Naive thymus-derived CD4-positive, alpha-beta T cell (primary cell): ENCODE measurements at regions of chr9 and their contacts with region 1.

Region 1: DNA sequence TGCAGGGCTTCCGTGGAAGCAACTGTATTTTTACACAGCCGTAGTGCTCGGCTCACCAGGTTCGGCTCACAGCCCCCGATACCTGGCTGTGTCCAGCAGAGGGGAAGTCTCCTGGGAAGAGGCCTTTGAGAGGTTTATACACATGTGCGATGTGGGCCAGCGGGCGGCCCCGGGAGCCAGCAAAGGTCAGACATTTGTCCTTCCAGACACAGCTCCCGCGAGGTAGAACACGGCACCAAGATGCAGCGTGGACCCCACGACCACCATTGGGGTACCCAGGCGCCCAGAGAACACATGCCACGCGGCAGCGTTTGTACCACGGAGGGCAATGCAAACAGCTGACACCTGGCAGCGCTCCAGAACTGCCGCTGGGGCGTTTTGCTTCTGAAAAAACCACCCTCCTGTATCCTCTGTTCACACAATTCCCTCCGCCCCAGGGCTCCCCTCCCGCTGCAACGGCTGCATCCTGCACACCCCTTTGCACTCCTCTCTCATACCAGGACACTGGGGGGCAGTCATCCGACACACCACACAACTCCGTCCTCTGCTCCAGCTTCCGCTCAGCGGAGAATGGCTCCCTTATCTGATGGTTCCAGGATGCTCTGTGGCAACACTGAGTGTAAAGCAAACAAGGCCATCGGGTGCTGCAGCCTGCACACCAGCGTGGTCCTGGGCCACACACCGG is 235.3 kb downstream of the SYK start:
- DNase-seq: peak; percentile 31 to 69 (median 54)
- ATAC-seq: peak; percentile 88
- H3K4me3 ChIP-seq: no peak overlapping the region
- H3K4me3 Mint-ChIP-seq: peak overlapping the region in 9 of 10 donors; percentile 13 to 73 (median 37)
- H3K27ac ChIP-seq: no peak overlapping the region
- H3K27ac Mint-ChIP-seq: peak overlapping the region in 5 of 9 donors; percentile 13 to 38 (median 26)
- H3K4me1 ChIP-seq: peaks cover 8 to 11% of the 10 kb centered on the region in 2 donors
- H3K4me1 Mint-ChIP-seq: peaks cover 10 to 65% (median 11%) of the 10 kb centered on the region in 7 donors
- H3K27me3 ChIP-seq: no peaks in the 10 kb centered on the region
- H3K27me3 Mint-ChIP-seq: peaks cover 0 to 34% (median 14%) of the 10 kb centered on the region in 5 donors

Region 2: GRCh38 chr9:91253488-91253887 is 216.5 kb after region 1 on chr9:
- CTCF ChIA-PET with region 1: no interaction called
- POLR2A ChIA-PET with region 1: no interaction called
- intact Hi-C with region 1: loop called (anchors 1 kb)
- DNase-seq: peak in 6 of 9 donors; percentile 5 to 32 (median 12)
- ATAC-seq: peak; percentile 64
- H3K4me3 ChIP-seq: no peak overlapping the region
- H3K4me3 Mint-ChIP-seq: no peak overlapping the region
- H3K27ac ChIP-seq: no peak overlapping the region
- H3K27ac Mint-ChIP-seq: peak overlapping the region in 1 of 9 donors; percentile 23
- H3K4me1 ChIP-seq: peaks cover 0 to 8% of the 10 kb centered on the region in 2 donors
- H3K4me1 Mint-ChIP-seq: peaks cover 0 to 45% (median 6%) of the 10 kb centered on the region in 7 donors
- H3K27me3 ChIP-seq: no peaks in the 10 kb centered on the region
- H3K27me3 Mint-ChIP-seq: no peaks in the 10 kb centered on the region

Region 3: DNA sequence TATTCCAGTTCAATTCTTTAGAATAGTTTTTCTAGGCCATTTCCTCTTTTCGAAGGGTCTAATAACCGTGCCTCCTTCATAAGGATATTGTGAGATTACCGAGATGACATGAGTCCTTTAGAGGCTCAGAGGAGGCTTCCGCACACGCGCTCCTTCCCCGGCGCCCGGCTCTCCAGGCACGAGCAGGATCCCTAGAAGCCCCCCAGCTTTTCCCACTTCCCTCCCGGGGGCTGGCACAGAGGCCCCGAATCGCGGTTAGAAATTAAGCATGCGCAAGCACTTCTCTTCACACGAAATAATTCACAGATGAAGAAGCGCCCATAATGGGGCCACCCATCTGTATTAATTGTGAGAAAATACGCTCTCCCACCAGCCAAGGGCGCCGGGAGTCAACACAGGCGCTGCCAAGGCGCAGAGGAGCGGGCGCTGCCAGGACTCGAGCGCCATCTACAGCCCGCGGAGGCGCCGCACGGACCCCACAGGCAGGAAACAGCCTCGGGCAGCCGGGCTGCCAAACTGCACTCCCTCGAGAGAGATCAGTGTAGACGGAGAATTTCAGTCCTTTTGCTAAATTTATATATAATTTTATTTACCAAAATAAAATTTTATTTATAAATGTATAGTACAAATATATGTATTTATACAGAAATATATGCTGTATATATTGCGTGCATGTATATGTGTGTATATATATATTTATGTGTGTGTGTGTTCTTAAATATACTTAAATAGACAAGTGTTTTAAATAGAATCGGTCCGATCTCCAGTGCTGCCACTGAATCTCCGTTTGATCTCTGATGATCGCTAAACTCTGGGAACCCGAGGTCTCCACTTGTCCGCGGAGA is 644.7 kb after region 1 on chr9:
- CTCF ChIA-PET with region 1: no interaction called
- POLR2A ChIA-PET with region 1: no interaction called
- intact Hi-C with region 1: loop called in 1 of 2 experiments (anchors 10 kb)
- DNase-seq: peak in 7 of 9 donors; percentile 11 to 76 (median 37)
- ATAC-seq: peak; percentile 85
- H3K4me3 ChIP-seq: no peak overlapping the region
- H3K4me3 Mint-ChIP-seq: peak overlapping the region in 6 of 10 donors; percentile 7 to 46 (median 31)
- H3K27ac ChIP-seq: no peak overlapping the region
- H3K27ac Mint-ChIP-seq: no peak overlapping the region
- H3K4me1 ChIP-seq: no peaks in the 10 kb centered on the region
- H3K4me1 Mint-ChIP-seq: peaks cover 0 to 5% (median 0%) of the 10 kb centered on the region in 7 donors
- H3K27me3 ChIP-seq: no peaks in the 10 kb centered on the region
- H3K27me3 Mint-ChIP-seq: peaks cover 21 to 46% (median 35%) of the 10 kb centered on the region in 5 donors

Region 4: DNA sequence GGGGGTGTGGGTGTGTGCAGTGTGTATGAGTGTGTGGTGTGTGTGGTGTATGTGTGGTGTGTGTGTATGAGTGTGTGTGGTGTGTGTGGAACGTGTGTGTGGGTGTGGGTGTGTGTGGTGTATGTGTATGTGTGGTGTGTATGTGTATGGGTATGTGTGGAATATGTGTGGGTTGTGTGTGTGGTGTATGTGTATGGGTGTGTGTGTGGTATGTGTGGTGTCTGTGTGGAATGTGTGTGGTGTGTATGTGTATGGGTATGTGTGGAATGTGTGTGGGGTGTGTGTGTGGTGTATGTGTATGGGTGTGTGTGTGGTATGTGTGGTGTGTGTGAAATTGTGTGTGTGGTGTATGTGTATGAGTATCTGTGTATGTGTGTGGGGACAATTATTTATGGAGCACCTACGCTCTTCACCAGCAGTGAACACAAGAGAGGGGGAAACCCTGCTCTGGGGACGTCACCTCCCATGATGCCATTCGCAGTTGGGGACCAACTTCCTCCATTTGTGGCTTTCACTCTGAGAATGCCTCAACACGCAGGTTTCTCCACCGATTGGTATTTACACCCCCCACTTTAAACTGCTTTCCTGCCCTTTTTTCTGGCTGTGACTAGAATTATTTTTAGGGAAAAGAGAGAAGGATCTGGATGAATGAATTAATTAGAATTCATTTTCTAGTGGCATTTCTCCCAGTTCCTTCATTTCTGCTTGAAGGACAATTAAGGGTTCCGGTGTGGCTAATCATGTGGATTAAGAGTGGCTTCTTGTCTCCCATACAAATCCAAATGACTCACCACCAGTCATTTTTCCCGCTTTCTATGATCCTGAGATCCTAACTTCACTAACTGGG is 675.0 kb after region 1 on chr9:
- CTCF ChIA-PET with region 1: no interaction called
- POLR2A ChIA-PET with region 1: no interaction called
- intact Hi-C with region 1: loop called in 1 of 2 experiments (anchors 10 kb)
- DNase-seq: peak in 7 of 9 donors; percentile 6 to 64 (median 34)
- ATAC-seq: peak; percentile 90
- H3K4me3 ChIP-seq: peak overlapping the region; percentile 2
- H3K4me3 Mint-ChIP-seq: peak overlapping the region in 1 of 10 donors; percentile 15
- H3K27ac ChIP-seq: no peak overlapping the region
- H3K27ac Mint-ChIP-seq: no peak overlapping the region
- H3K4me1 ChIP-seq: peaks cover 5 to 6% of the 10 kb centered on the region in 2 donors
- H3K4me1 Mint-ChIP-seq: peaks cover 0 to 6% (median 3%) of the 10 kb centered on the region in 7 donors
- H3K27me3 ChIP-seq: no peaks in the 10 kb centered on the region
- H3K27me3 Mint-ChIP-seq: peaks cover 19 to 34% (median 26%) of the 10 kb centered on the region in 5 donors